Endothelial cell of umbilical vein (primary cell): ENCODE measurements at regions of chr16 and their contacts with region 1.

Region 1: GRCh38 chr16:69112285-69113129 is 7.1 kb downstream of the HAS3 start:
- DNase-seq: peak; percentile 52
- H3K4me3 ChIP-seq: no peak overlapping the region
- H3K27ac ChIP-seq: no peak overlapping the region
- H3K4me1 ChIP-seq: peaks cover 18% of the 10 kb centered on the region
- H3K27me3 ChIP-seq: no peaks in the 10 kb centered on the region
- CTCF ChIP-seq: peak; percentile 90
- POLR2A ChIP-seq: no peak

Region 2: DNA sequence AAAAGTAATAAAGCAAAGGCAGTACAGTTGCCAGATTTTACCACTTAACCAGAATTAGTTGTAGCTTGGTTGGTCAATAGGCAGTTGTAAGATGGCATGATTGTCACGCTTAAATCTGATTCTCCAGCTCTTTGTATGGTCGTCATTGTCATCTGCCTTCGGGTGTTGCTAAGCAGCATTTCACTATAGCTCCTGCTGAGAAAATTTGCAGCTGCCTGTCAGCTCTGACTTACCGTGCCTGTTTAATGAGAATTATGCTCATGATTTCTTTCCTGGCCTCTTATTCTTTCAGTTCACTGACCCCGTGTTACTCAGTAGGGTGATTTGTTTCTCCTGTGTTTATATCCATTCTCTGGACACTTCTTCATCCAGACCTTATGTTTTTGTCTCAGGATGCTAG is 202.5 kb before region 1 on chr16:
- CTCF ChIA-PET with region 1: interaction called, 14 read pairs
- POLR2A ChIA-PET with region 1: interaction called, 7 read pairs
- dilution Hi-C with region 1: no loop called
- intact Hi-C with region 1: no loop called
- DNase-seq: no peak
- H3K4me3 ChIP-seq: no peak overlapping the region
- H3K27ac ChIP-seq: no peak overlapping the region
- H3K4me1 ChIP-seq: no peaks in the 10 kb centered on the region
- H3K27me3 ChIP-seq: no peaks in the 10 kb centered on the region
- CTCF ChIP-seq: no peak
- POLR2A ChIP-seq: no peak

Region 3: DNA sequence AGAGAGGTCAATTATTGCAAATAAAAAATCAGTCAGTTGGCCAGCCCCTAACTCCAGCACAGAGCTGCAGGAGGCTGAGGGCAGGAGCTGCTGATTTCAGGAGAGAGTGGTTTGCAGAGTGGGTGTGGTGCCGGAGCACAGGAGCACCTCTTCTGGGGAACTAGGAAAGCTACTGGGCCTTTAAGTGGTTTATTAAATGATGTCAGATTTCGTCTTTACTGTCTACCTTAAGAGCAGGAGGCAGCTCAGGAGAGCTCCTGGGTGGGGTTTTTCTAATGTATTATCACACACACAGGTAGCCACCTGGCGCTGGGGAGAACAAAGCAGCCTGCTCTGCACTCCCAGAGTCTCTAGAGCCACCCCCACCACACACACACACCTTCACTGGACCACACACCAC is 18.5 kb before region 1 on chr16:
- CTCF ChIA-PET with region 1: interaction called, 14 read pairs
- POLR2A ChIA-PET with region 1: no interaction called
- dilution Hi-C with region 1: no loop called
- intact Hi-C with region 1: no loop called
- DNase-seq: no peak
- H3K4me3 ChIP-seq: no peak overlapping the region
- H3K27ac ChIP-seq: no peak overlapping the region
- H3K4me1 ChIP-seq: peaks cover 3% of the 10 kb centered on the region
- H3K27me3 ChIP-seq: no peaks in the 10 kb centered on the region
- CTCF ChIP-seq: no peak
- POLR2A ChIP-seq: no peak

Region 4: GRCh38 chr16:69100071-69100691 is 12.3 kb before region 1 on chr16:
- CTCF ChIA-PET with region 1: interaction called, 15 read pairs
- POLR2A ChIA-PET with region 1: no interaction called
- dilution Hi-C with region 1: no loop called
- intact Hi-C with region 1: no loop called
- DNase-seq: no peak
- H3K4me3 ChIP-seq: no peak overlapping the region
- H3K27ac ChIP-seq: no peak overlapping the region
- H3K4me1 ChIP-seq: peaks cover under 1% of the 10 kb centered on the region
- H3K27me3 ChIP-seq: no peaks in the 10 kb centered on the region
- CTCF ChIP-seq: no peak
- POLR2A ChIP-seq: no peak